Left ventricle myocardium superior (tissue), 1 donor: ENCODE measurements at regions of chr1 and their contacts with region 1.

Region 1: DNA sequence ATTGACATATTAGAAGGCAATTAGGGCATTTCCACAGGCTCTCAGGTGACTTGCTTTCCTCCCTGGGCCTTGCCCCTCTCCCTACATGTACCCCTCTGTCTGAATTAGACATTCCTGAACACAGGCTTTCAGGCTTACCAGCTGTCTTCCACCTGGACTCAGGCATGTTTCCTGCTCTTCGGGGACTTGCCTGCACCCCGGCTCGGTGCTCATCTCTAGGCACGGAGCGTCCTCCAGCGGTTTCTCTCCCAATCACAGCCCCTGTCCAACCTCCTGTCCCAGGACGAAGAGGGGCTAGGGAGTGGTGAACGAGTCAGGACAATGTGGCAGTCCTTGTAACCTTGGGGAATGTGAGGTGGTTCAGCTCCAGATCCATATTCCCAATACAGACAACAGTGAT is 4.2 kb downstream of the PROK1 start:
- DNase-seq: no peak
- ATAC-seq: no peak

Region 2: GRCh38 chr1:110319332-110320152 is 135.6 kb before region 1 on chr1:
- intact Hi-C with region 1: loop called (anchors 10 kb)
- DNase-seq: no peak
- ATAC-seq: no peak